Heart right ventricle (tissue), 16 donors: ENCODE measurements at regions of chr14 and their contacts with region 1.

Region 1: DNA sequence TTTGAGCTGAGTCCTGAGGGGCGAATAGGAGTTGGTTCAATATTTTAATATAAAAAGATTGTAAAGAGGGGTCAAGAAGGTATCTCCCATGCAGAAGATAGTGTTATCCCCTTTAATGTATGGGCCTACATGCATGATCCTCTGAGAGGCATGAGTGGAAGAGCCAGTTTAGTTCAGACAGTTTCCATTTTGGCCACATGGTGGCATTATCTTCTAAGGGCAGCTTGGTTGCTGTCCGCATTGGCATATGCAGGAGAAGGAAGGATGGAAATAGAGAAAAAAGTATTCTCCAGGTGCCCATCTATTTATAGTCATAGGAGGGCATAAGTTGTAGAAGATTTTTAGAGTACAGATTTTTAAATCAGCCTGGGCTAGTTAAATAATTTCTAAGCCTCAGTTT is 5.4 kb downstream of the SAMD4A start:
- DNase-seq: no peak
- ATAC-seq: no peak
- H3K4me3 ChIP-seq: no peak overlapping the region
- H3K27ac ChIP-seq: no peak overlapping the region
- H3K4me1 ChIP-seq: peaks cover 6 to 92% (median 61%) of the 10 kb centered on the region in 9 donors
- H3K27me3 ChIP-seq: peaks cover 0 to 16% (median 0%) of the 10 kb centered on the region in 7 donors
- CTCF ChIP-seq: peak in 8 of 9 donors; percentile 25 to 58 (median 44)

Region 2: DNA sequence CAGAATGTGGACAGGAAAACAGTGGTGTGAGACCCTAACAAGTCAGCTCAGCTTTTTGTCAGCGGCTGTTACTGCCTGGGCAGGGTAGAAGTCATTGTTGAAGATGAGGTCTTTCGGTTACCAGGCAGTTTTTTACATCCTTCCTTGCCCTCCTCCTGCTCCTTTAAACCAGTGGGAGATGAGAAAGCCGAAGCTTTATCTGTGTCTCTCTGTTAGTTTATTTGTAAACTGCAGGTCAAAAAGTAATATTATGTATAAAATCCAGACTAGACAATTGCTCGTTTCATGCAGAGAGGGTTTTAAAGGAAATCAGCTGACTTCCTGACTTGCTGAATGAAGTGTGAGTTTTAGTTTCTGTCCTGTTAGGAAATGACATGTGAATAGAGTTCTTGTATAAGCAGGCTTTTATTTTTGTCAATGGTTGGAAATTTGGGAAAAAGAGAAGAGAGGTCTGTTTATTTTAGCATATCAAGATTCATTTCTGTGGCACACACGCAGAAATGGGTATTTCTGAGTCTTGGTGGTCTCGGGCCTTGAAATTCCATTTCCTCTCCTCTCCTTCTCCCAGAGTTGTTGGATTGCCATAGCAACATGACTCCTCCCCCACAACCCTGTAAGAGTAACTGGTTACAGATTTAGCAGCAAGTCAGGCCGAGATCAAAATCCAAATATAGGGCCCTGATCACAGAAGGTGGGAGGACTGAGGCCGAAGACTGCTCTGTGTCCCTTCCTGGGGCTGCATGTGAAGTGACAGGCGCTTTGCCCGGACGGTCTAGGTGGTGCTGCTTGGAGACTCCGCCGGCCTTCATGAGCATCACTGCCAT is 55.4 kb after region 1 on chr14:
- intact Hi-C with region 1: loop called in 4 of 10 experiments (anchors 5 to 10 kb)
- DNase-seq: peak; percentile 33 to 85
- ATAC-seq: peak; percentile 82 to 94 (median 90)
- H3K4me3 ChIP-seq: peak overlapping the region in 9 of 10 donors; percentile 4 to 50 (median 26)
- H3K27ac ChIP-seq: peak overlapping the region; percentile 38 to 92 (median 78)
- H3K4me1 ChIP-seq: peaks cover 6 to 67% (median 63%) of the 10 kb centered on the region in 9 donors
- H3K27me3 ChIP-seq: no peaks in the 10 kb centered on the region
- CTCF ChIP-seq: no peak

Region 3: DNA sequence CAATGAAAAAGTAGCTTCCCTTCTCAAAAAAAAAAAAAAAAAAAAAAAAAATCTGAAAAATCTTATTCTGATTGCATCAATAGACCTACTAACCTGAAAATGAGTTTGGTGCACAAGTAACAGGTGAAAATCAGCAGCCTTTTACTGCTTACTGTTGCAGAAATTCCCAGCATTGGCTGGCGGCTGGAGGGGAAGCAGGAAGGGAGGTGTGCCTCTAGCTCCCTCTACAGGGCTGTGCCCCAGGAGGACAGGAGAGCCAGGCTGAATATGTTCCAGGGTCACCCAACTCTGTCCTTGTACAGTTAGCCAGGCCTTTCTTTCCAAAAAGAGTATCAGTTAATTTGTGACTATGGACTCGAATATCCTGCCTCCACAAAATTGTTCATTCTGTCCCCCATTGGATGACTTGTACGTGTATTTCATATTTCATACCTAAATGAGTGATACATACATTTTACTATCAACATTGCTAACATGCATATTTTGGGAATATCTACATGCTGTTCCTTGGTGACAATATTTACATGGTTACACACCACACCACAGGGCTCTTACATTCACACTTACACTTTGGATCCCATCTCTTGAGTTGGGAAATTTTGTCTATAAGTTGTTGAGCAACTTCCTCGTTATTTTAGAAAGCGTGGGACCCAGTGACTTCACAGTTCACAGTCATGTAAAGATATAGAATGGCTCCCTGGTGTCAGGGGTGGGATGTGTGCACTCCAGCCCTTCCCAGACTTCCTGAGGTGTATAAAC is 119.4 kb after region 1 on chr14:
- intact Hi-C with region 1: loop called in 6 of 10 experiments (anchors 1 to 5 kb)
- DNase-seq: peak; percentile 70 to 85
- ATAC-seq: peak; percentile 71 to 88 (median 82)
- H3K4me3 ChIP-seq: no peak overlapping the region
- H3K27ac ChIP-seq: peak overlapping the region in 9 of 10 donors; percentile 14 to 96 (median 75)
- H3K4me1 ChIP-seq: peaks cover 11 to 86% (median 52%) of the 10 kb centered on the region in 9 donors
- H3K27me3 ChIP-seq: no peaks in the 10 kb centered on the region
- CTCF ChIP-seq: peak; percentile 83 to 95 (median 91)